ENCODE measurements at regions of chr4 and their contacts with region 1.

Region 1: GRCh38 chr4:108018040-108018883 is 28.6 kb downstream of the HADH start:
- DNase-seq: peak; percentile 70 to 86
- ATAC-seq: peak; percentile 69 to 86 (median 78)
- H3K4me3 ChIP-seq: no peak overlapping the region
- H3K27ac ChIP-seq: peak overlapping the region in 2 of 10 donors; percentile 5 to 16
- H3K4me1 ChIP-seq: peaks cover 0 to 27% (median 6%) of the 10 kb centered on the region in 9 donors
- H3K27me3 ChIP-seq: no peaks in the 10 kb centered on the region
- CTCF ChIP-seq: peak; percentile 68 to 91 (median 87)

Region 2: DNA sequence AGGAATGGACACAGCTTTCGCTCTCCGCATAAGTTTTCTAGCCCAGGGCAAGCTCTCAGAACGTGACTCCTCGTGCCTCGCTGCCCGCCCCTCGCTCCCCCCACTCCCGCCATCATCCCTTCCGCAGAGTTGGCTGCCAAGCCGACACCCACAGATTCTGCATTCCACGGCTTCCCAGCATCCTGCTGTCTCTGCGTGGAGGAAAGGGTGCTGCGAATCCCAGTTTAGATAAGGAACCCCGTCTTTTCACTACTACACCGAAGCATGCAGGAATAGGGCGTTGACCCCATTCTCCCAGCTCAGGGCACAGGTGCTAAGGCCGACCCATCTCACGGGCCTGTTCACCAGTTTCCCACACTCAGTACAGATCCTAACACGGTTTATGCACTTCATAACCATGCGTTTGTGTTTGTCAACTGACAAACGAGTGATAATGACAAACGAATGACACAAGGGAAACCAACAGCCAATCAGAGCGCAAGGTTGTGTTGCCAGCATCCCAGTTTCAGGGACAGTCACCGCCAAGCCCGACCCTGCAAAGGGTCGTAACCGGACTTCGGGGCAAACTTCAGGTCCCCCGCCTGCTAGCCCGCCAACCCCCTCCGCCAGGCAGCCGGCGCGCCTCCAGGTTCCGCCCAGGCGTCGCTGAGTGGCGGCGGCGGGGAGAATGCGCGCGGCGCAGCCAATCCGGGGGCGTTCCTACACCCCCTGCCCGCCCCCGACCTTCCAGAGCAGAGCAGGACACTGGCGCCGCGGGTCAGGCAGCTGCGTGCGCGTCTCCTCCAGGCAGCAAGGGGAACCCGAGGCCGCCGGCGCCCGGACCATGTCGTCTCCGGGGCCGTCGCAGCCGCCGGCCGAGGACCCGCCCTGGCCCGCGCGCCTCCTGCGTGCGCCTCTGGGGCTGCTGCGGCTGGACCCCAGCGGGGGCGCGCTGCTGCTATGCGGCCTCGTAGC is 87.2 kb before region 1 on chr4 and contains the start of gene CYP2U1:
- intact Hi-C with region 1: loop called in 1 of 10 experiments (anchors 5 kb)
- DNase-seq: peak; percentile 88 to 92
- ATAC-seq: peak; percentile 97 to 99 (median 98)
- H3K4me3 ChIP-seq: peak within 1 kb of the TSS; percentile 63 to 95 (median 84)
- H3K27ac ChIP-seq: peak within 1 kb of the TSS; percentile 14 to 90 (median 85)
- H3K4me1 ChIP-seq: peaks cover 4 to 37% (median 15%) of the 10 kb centered on the region in 9 donors
- H3K27me3 ChIP-seq: peaks cover 0 to 3% (median 0%) of the 10 kb centered on the region in 7 donors
- CTCF ChIP-seq: peak in 5 of 9 donors; percentile 5 to 45 (median 37)
- total RNA-seq, gene CYP2U1: 5.6 to 10.2 (median 6.7) TPM

Region 3: GRCh38 chr4:108155373-108155772 is 137.1 kb after region 1 on chr4:
- intact Hi-C with region 1: no loop called
- DNase-seq: no peak
- ATAC-seq: no peak
- H3K4me3 ChIP-seq: no peak overlapping the region
- H3K27ac ChIP-seq: no peak overlapping the region
- H3K4me1 ChIP-seq: no peaks in the 10 kb centered on the region
- H3K27me3 ChIP-seq: peaks cover 0 to 60% (median 35%) of the 10 kb centered on the region in 7 donors
- CTCF ChIP-seq: peak in 2 of 9 donors; percentile 13 to 19

Region 4: DNA sequence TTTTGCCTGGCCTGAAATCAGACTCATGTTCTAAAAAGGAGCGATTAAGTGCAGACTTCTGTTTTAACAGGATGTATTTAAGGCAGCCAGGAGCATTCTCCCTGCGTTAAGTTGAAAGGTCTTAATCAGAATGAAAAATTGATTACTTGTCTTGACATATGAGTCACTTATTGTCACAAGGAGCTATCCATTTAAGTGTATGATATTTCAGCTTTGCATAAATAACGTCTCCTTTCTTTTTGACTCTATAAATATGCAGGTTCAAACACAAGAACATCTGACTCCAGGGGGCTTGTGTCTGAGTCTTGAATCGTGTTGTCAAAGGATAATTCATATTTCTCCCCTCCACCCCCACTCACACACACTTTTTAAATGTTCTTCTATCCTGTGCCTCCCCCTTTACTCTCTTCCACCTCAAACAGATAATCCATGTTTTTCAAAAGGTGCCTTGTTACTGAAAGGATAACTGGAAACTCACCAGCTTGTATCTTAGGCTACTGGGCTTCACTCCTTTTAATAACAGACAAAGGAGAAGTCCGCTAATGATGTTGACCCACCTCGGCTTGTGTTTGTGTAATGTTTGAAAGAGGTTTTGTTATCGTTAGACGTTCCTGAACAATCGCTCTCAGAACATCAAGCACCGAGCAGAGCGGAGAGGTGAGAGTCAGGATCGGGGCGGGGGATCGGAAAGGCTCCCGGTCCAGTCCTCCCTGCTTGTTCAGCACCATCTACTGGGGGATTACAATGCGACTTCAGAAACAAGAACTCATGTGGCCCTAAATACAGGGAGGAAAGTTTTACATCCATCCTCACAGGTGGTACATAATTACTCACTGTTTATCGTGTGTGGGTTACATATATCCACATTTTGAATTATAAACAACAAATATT is 494.6 kb after region 1 on chr4:
- intact Hi-C with region 1: loop called in 1 of 10 experiments (anchors 5 kb)
- DNase-seq: peak in 1 of 2 donors; percentile 38
- ATAC-seq: peak in 7 of 8 donors; percentile 49 to 86 (median 60)
- H3K4me3 ChIP-seq: no peak overlapping the region
- H3K27ac ChIP-seq: no peak overlapping the region
- H3K4me1 ChIP-seq: peaks cover 0 to 6% (median 0%) of the 10 kb centered on the region in 9 donors
- H3K27me3 ChIP-seq: peaks cover 0 to 36% (median 21%) of the 10 kb centered on the region in 7 donors
- CTCF ChIP-seq: peak in 8 of 9 donors; percentile 12 to 65 (median 52)

Measured in heart right ventricle (tissue), 16 donors.